GM10248 (cell line): ENCODE measurements at regions of chr13 and their contacts with region 1.

Region 1: DNA sequence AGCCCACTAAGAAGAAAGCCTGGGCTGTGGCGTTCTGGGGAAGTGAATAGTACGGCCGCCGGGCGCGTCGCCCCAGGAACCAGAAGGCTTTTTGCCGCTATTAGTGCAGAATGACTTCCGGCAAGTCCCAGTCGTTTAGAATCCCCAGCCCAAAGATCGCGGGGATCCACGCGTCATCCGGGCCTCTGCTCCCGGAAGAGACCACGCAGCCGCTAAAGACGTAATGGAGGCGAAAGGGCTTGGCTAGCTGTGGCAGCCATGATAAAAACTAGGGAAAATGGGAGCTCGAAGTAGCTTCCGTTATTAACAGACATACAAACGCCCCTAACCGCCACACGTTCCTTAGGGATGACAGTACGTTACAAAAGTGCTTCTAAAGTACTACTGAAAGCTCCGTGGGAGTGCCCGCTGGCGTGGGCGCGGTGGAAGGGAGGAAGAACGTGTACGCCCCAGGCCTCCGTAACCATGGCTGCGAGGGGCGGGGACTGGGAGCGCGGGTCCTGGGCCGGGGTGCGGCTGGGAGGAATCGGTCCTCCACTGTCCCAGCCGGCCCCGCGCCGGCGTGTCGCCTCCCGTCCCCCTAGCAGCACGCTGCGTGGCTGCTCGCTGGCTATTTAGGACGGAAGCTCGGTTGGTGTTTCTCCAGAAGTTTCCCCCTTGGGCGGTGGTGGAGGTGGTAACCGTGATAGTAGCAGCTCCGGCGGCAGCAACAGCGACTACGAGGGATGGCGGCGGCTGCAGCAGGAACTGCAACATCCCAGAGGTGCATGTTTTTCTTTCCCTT is at the start of gene SUGT1:
- DNase-seq: peak; percentile 91
- CTCF ChIP-seq: peak; percentile 47

Region 2: DNA sequence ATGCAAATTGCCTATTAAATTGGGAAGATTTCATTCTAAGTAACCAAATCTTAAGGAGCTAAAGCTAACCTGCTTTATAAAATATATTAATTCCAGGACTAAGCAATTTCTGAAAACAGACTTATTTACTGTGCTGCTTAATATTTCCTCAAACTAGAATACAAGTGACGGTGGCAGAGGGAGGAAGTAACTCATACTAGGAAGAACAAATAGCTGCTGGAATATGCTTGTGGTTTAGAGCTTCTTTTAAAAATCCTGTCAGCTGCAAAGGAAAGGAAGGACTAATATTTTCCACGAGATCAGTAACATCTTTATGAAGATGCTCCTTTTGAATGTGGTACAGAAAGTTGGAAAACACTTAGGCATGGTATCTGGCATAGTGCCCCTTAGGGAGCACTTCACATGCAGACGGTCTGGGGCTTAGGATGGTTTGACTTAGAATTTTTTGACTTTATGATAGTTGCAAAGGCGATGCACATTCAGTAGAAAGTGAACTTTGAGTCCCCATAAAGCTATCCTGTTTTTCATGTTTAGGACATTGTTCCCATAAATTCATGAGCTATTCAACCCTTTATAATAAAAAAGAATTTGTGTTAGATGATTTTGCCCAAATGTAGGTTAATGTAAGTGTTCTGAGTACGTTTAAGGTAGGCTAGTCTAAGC is 13.6 kb before region 1 on chr13:
- CTCF ChIA-PET with region 1: interaction called, 10 read pairs
- POLR2A ChIA-PET with region 1: no interaction called
- DNase-seq: no peak
- CTCF ChIP-seq: no peak

Region 3: DNA sequence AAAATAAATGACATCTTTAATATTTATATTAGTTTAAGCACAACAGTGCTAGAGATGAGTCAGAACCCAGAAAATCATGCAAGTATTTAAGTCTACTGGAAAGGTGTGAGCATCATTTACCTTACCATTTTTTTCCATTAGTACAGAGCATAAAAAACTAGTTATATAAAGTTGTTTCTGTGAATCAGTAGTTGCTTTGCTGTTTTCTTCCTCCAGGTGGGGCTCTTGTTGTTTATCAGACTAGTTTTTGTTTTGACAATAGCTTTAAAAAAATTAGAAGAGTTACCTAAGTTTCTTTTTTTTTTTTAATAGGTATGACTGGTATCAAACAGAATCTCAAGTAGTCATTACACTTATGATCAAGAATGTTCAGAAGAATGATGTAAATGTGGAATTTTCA is 12.9 kb after region 1 on chr13:
- CTCF ChIA-PET with region 1: interaction called, 55 read pairs
- POLR2A ChIA-PET with region 1: interaction called, 5 read pairs
- DNase-seq: peak; percentile 20
- CTCF ChIP-seq: peak; percentile 37